ENCODE measurements at regions of chr18 and their contacts with region 1.

Region 1: GRCh38 chr18:31637445-31637844 is 45.8 kb downstream of the TTR start:
- DNase-seq: no peak
- H3K4me3 ChIP-seq: no peak overlapping the region
- H3K27ac ChIP-seq: no peak overlapping the region
- H3K4me1 ChIP-seq: peaks cover 16 to 36% (median 32%) of the 10 kb centered on the region in 4 experiments
- H3K27me3 ChIP-seq: no peaks in the 10 kb centered on the region

Region 2: GRCh38 chr18:31649978-31650719 is 12.7 kb after region 1 on chr18:
- CTCF ChIA-PET with region 1: interaction called, 17 read pairs
- POLR2A ChIA-PET with region 1: interaction called, 3 read pairs
- DNase-seq: peak in 1 of 3 donors; percentile 19
- H3K4me3 ChIP-seq: peak overlapping the region in 1 of 7 experiments; percentile 23
- H3K27ac ChIP-seq: peak overlapping the region in 1 of 2 experiments; percentile 10
- H3K4me1 ChIP-seq: peaks cover 9 to 79% (median 57%) of the 10 kb centered on the region in 4 experiments
- H3K27me3 ChIP-seq: no peaks in the 10 kb centered on the region

Region 3: DNA sequence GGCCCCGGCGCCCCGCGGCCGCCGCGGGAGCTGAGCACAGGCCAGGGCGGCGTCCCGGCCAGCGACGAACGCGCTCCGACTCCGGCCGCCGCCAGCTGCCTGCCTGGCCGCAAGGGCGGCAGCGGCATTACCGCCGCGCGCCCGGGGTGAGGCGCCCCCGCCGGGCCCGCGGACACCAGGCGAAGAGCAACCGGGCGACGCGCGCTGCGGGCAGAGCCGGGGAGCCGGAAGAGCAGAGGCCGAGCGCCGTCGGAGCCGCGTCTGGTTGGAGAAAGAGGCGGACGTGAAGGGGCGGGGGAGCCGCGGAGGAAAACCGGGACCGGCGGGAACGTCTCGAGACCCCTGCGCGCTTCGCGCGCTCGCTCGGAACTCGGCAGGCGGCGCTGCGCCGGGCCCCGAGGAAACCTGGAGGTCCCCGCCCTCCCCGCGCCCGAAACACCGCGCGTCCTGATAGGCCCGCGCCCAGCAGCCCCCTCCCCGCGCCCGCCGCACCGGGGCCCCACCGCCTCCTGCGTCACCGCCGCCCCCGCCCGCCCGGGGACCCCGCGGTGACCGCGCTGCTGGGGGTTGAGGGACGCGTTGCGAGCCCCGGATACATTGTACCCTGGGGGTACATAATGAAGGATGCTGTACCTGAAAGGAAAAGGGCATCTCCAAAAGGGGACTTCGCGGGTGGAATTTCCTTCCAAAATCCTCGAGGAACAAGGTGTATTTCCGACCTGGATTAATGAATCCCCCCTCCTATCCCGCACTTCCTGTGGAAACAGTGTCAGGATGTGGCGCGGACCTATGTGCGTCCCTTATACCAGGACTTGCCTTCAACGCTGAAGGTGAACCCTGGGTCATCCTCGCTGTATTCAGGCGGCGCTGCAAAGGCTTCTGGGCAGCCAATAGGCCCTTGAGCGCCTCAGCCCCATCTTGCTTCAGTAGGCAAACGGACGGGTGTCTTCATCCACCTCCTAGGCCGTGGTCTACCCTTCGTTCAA is 47.9 kb after region 1 on chr18:
- CTCF ChIA-PET with region 1: interaction called, 10 read pairs
- POLR2A ChIA-PET with region 1: no interaction called
- DNase-seq: peak; percentile 89 to 94 (median 91)
- H3K4me3 ChIP-seq: peak overlapping the region; percentile 70 to 94 (median 87)
- H3K27ac ChIP-seq: peak overlapping the region; percentile 83 to 89
- H3K4me1 ChIP-seq: peaks cover 28 to 74% (median 57%) of the 10 kb centered on the region in 4 experiments
- H3K27me3 ChIP-seq: no peaks in the 10 kb centered on the region

Region 4: DNA sequence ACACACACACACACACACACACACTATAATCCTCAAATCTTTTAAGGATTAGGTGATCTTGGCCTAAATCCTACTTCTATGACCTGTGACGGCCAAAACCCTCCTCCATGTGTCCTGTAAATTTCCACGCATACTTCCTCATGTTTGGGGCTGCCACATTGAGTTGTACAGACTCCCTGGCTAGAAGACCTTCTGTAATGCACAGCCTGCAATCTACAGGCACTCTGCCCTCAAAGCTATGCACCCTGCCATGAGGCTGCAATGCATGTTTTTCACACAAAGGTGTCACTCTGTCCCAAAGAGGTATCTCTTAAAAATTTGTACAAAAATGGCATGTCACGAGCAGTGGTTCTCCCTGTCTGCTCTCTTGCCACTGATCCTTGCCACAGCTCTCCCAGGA is 73.4 kb after region 1 on chr18:
- CTCF ChIA-PET with region 1: no interaction called
- POLR2A ChIA-PET with region 1: no interaction called
- DNase-seq: peak; percentile 46 to 72 (median 61)
- H3K4me3 ChIP-seq: no peak overlapping the region
- H3K27ac ChIP-seq: peak overlapping the region in 1 of 2 experiments; percentile 2
- H3K4me1 ChIP-seq: peaks cover 0 to 7% (median 3%) of the 10 kb centered on the region in 4 experiments
- H3K27me3 ChIP-seq: no peaks in the 10 kb centered on the region

Region 5: DNA sequence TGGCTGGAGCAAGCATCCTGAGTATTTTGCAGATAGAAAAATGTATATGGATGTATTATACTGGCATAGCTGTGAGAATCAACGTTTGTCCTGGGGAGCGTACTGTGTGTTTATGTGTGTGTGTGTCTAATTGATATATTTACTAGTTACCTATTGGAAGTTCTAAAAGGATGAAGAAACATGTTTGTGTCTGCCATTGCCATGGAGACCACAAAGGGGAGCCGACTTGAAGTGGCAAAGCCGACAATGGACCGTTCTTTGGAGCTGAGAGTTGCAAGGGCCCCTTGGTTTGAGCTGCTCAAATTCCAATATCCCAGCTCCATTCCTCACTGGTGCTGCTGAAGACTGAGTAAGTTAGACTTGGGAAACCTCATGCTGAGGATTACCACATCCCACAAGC is 137.5 kb after region 1 on chr18:
- CTCF ChIA-PET with region 1: no interaction called
- POLR2A ChIA-PET with region 1: no interaction called
- DNase-seq: no peak
- H3K4me3 ChIP-seq: no peak overlapping the region
- H3K27ac ChIP-seq: no peak overlapping the region
- H3K4me1 ChIP-seq: peaks cover 0 to 14% (median 0%) of the 10 kb centered on the region in 4 experiments
- H3K27me3 ChIP-seq: no peaks in the 10 kb centered on the region

Region 6: DNA sequence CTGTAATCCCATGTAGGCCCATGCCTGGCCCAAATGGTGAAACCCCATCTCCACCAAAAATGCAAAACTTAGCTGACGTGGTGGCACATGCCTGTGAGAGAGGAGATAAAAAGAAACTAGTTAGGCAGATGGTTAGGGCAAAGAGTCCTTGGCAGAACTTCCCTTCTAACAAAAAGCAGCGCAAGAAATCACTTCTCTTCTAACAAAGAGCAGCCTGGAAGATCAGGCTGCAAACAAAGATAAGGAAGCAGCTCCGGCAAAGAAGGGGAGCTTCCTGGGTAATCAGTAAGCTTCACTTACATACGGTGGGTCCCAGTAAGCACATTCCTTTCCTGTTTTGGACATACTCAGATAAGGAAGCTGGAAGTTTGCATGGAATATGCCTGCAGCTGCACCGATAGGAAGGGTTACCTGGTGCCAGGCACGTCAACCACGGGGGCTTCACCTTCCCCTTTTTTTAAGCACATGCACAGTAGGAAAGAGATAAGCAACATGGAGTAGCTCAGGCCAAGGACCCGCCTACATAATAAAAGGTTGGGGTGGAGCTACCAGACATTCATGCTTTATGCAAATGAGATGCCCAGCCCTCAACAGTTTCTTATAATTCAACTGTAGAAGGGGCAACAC is 184.2 kb after region 1 on chr18:
- CTCF ChIA-PET with region 1: no interaction called
- POLR2A ChIA-PET with region 1: no interaction called
- DNase-seq: peak; percentile 38 to 84 (median 69)
- H3K4me3 ChIP-seq: peak overlapping the region in 1 of 7 experiments; percentile 30
- H3K27ac ChIP-seq: peak overlapping the region in 1 of 2 experiments; percentile 14
- H3K4me1 ChIP-seq: peaks cover 0 to 8% (median 4%) of the 10 kb centered on the region in 4 experiments
- H3K27me3 ChIP-seq: no peaks in the 10 kb centered on the region